ENCODE measurements at regions of chrX and their contacts with region 1.

Region 1: GRCh38 chrX:9464435-9465371 is at the start of gene TBL1X:
- DNase-seq: peak in 40 of 42 donors; percentile 24 to 78 (median 56)

Region 2: GRCh38 chrX:9341291-9342201 is 123.2 kb before region 1 on chrX:
- intact Hi-C with region 1: loop called (anchors 1 kb)
- DNase-seq: peak in 37 of 42 donors; percentile 18 to 78 (median 51)

Region 3: DNA sequence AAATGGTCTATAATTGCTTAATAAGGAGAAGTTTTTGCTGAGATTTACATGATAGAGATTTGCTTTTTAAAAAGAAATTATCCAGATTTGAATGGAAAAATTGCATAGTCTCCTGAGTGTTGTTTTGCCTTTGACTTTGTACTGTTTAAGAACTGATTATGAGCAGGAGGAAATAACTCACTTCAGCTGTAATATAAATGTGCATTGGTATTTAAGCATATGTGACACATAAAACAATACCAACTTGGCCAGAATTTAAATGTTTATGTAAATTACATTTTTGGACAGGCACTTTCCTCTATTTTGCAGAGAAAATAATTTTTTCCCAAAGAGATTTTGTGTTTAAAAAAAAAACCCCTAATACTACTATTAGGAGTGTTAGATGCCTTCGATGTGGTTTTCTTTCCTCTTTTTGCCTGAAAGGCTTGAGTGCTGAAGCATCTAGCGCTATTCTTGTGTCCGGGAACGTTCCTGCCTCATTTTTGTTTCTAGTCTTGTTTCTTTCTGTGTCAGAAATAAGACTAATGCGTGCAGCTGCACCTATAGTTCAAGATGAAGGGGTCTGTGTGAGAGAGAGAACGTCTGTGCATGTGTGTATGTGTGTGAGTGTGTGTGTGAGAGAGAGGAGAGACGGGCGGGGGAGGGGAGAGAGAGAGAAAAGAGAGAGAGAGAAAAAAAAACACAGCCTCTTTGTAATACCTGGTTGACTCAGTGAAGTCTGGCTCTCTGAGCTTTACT is 61.0 kb after region 1 on chrX:
- intact Hi-C with region 1: loop called (anchors 5 kb)
- DNase-seq: peak in 1 of 42 donors; percentile 45

Region 4: DNA sequence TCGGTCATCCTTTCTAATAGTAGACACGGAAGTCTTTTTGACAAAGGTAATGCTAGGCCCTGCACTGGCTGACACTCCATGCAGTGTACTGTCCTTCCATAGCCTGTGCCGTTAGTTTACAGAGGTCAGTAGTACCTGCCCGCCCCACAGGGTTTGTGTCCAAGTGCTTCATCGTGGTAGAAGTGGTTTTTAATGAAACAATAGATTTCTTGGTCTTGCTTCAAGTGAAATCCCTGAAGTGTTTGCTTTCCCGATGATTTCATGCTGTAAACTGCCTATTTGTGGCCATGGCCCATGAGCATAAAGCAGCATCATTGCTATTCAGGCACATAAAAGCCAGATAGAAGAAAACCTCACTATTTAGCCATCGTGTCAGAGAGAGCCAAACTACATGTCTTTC is 161.7 kb after region 1 on chrX:
- intact Hi-C with region 1: no loop called
- DNase-seq: no peak